ENCODE measurements at regions of chr12 and their contacts with region 1.

Region 1: GRCh38 chr12:122860346-122861090 is 25.3 kb downstream of the HIP1R start:
- DNase-seq: peak; percentile 64
- H3K4me3 ChIP-seq: no peak overlapping the region
- H3K27ac ChIP-seq: no peak overlapping the region
- H3K4me1 ChIP-seq: peaks cover 26% of the 10 kb centered on the region
- H3K27me3 ChIP-seq: no peaks in the 10 kb centered on the region
- CTCF ChIP-seq: peak; percentile 66 to 94

Region 2: DNA sequence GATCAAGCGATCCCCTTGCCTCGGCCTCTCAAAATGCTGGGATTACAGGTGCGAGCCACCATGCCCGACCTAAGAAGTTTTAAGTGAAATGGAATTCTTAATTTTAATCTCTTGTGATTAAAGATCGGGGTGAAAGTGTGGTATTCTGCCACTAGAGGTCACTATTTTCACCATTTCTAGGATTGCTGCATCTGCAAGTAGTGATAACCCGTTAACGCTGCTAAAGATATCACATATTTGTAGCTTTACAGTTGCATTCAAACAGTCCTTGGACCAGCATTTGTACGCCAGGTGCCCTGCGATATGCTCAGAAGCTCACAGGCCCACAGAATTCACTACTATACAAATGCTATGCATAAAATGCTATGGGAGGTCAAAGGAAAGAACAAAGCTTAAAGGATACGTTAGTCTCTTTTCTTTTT is 66.8 kb before region 1 on chr12:
- CTCF ChIA-PET with region 1: no interaction called
- dilution Hi-C with region 1: no loop called
- in situ Hi-C with region 1: no loop called
- intact Hi-C with region 1: loop called (anchors 2 kb)
- DNase-seq: peak; percentile 39
- H3K4me3 ChIP-seq: no peak overlapping the region
- H3K27ac ChIP-seq: no peak overlapping the region
- H3K4me1 ChIP-seq: peaks cover 20% of the 10 kb centered on the region
- H3K27me3 ChIP-seq: no peaks in the 10 kb centered on the region
- CTCF ChIP-seq: peak; percentile 57 to 63

Region 3: DNA sequence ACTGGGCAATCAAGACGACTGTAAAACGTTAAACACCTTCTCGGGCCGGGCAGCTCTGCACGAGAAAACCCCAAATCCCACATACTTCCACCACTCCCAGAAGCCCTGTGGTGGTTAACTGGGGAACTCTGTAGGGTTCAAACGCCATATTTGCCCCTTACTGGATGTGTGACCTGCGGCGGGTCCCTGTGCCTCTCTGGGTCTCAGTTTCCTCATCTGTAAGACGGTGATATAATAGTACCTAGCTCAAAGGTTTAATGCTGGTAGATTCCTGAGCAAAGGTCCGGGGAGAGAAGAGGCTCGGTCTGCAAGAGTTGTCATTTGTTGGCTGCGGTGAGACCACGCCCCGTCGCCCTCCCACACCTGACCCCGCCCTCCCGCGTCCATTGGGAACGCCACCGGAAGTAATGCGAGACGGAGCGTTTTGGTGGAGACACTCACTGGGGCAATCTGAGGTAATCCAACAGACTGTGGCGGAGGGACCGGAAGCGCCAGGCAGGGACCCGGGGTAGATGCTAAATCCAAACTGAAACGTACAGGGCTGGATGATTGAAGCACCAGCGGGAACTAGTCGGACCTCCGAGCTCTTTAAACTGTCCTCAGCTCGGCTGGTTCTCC is 113.9 kb after region 1 on chr12:
- CTCF ChIA-PET with region 1: no interaction called
- dilution Hi-C with region 1: no loop called
- in situ Hi-C with region 1: no loop called
- intact Hi-C with region 1: no loop called
- DNase-seq: peak; percentile 98
- H3K4me3 ChIP-seq: peak overlapping the region; percentile 82 to 93 (median 87)
- H3K27ac ChIP-seq: peak overlapping the region; percentile 83
- H3K4me1 ChIP-seq: peaks cover 18% of the 10 kb centered on the region
- H3K27me3 ChIP-seq: no peaks in the 10 kb centered on the region
- CTCF ChIP-seq: no peak

Region 4: DNA sequence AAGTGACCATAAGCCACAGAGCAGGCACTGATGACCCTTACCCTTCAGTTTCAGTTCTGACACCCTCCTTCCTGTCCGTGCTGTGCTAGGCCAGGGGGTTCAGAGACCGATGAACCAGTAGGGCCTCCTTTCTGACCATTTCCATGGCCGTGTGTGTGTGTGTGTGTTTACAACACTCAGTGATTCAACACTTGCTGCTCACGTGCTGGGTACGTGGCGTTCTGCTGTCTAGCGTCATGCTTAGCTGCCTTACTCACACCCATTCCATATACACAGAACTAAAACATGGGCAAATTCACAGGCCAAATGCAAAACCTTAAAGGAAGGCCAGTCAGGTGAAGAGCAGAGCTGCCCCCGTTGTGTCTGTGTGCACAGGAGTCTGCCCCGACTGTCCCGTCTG is 969.0 kb after region 1 on chr12:
- CTCF ChIA-PET with region 1: no interaction called
- dilution Hi-C with region 1: no loop called
- in situ Hi-C with region 1: no loop called
- intact Hi-C with region 1: no loop called
- DNase-seq: no peak
- H3K4me3 ChIP-seq: no peak overlapping the region
- H3K27ac ChIP-seq: no peak overlapping the region
- H3K4me1 ChIP-seq: no peaks in the 10 kb centered on the region
- H3K27me3 ChIP-seq: no peaks in the 10 kb centered on the region
- CTCF ChIP-seq: no peak

Measured in mammary epithelial cell (primary cell).